ENCODE measurements at regions of chr2 and their contacts with region 1.

Region 1: DNA sequence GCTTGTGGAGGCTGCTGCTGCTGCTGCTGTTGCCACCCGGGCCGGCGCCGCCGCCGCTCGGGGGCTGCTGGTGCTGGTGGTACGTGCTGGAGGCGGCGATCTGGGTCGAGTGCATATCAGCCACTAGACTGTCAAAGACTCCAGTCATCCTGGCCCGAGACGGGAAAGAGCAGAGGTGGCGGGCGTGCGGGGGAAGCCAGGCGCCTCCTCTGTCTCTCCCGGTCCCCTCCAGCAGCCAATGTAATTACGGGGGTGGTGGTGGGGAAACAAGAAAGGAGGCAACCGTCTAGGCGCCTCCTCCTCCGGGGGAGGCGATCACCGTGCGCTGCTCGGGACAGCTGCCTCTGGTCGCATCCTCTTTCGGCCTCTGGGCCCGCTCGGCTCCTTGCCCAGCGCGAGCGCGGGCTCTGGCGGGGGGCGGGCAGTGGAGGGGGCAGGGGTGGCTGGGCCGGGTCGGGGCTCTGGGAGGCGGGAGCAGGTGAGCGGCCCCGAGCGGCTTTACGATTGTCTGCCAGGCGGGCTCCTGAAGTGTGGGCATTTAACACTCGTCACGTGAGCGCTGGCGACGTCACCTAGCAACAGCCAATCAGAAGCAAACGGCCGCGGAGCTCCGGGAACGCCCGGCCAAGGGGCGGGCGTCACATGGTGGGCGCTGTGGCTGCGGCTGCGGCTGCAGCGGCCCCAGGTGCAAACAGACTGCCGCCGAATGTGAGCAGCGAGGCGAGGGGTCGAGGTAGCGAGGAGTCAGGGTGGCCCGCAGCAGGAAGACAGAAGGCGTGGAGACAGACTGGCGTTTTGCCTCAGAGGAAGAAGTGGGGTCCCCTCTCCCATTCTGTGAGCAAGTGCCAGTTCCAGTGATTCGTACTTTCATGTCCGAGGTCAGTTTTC is at the start of gene DLX2:
- DNase-seq: peak; percentile 53
- ATAC-seq: peak; percentile 68
- H3K4me3 Mint-ChIP-seq: peak within 1 kb of the TSS; percentile 80
- H3K27ac Mint-ChIP-seq: peak within 1 kb of the TSS; percentile 61
- H3K4me1 Mint-ChIP-seq: peaks cover 39% of the 10 kb centered on the region
- H3K27me3 Mint-ChIP-seq: peaks cover 56% of the 10 kb centered on the region
- CTCF ChIP-seq: no peak
- total RNA-seq, gene DLX2: 0.16 TPM in 1 of 2 replicates, not detected in the other

Region 2: DNA sequence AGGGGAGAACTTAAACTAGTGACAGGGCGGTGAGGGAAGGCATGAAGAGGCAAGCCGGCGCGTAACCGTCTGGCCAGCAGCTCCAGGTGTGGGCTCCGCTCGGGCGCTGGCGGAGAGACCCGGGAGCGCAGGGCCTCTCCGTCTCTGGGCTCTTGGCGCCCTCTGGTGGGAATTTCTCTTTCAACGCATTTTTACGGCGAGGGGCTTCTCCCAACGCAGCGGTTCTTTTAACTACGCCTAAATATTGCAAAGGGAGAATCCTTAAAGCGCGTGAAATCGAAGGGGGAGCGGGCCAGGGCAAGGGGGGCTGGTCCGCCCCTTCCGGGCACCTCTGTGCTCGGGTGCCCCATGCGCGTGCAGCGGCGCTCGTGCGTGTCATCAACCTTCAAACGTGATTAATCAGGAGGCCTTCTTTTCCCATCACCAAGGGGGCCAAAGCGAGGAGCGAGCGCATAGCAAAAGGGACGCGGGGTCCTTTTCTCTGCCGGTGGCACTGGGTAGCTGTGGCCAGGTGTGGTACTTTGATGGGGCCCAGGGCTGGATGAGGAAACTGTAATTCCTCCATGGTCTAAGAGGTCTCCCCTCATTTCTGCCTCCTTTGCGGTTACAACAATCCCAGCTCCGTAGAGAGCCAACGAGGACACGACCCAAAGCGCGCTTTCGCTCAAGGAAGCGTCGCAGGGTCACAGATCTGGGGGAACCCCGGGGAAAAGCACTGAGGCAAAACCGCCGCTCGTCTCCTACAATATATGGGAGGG is 1286.7 kb before region 1 on chr2:
- CTCF ChIA-PET with region 1: no interaction called
- POLR2A ChIA-PET with region 1: no interaction called
- intact Hi-C with region 1: loop called (anchors 5 kb)
- DNase-seq: peak; percentile 45
- ATAC-seq: peak; percentile 44
- H3K4me3 Mint-ChIP-seq: peak overlapping the region; percentile 70
- H3K27ac Mint-ChIP-seq: no peak overlapping the region
- H3K4me1 Mint-ChIP-seq: peaks cover 50% of the 10 kb centered on the region
- H3K27me3 Mint-ChIP-seq: peaks cover 64% of the 10 kb centered on the region
- CTCF ChIP-seq: no peak

Region 3: DNA sequence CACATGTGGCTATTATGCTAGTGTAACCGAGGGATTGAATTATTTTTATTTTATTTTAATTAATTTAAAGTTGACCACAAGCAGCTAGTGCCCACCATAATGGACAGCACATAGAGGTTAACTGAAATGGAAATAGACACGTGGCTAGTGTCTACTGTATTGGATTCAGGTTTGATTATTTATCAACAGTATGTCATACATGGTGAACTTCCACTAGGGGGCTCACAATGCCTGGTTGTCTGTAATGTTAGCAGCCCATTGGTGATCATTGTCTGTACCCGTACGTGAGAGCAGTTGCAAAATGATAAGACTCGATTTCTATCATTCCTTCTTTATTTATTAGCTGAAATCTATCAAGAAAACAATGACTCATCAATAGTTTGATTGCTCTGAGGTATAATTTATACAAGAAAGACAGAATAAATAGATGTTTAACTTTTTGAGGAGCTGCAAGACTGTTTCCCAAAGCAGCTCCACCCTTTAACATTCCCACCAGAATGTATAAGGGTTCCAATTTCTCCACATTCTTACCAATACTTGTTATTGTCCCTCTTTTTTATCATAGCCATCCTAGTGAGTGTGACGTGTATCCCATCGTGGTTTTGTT is 503.8 kb before region 1 on chr2:
- CTCF ChIA-PET with region 1: interaction called, 3 read pairs
- POLR2A ChIA-PET with region 1: no interaction called
- intact Hi-C with region 1: loop called (anchors 2 kb)
- DNase-seq: no peak
- ATAC-seq: peak; percentile 96
- H3K4me3 Mint-ChIP-seq: no peak overlapping the region
- H3K27ac Mint-ChIP-seq: no peak overlapping the region
- H3K4me1 Mint-ChIP-seq: peaks cover 3% of the 10 kb centered on the region
- H3K27me3 Mint-ChIP-seq: peaks cover 4% of the 10 kb centered on the region
- CTCF ChIP-seq: no peak

Region 4: DNA sequence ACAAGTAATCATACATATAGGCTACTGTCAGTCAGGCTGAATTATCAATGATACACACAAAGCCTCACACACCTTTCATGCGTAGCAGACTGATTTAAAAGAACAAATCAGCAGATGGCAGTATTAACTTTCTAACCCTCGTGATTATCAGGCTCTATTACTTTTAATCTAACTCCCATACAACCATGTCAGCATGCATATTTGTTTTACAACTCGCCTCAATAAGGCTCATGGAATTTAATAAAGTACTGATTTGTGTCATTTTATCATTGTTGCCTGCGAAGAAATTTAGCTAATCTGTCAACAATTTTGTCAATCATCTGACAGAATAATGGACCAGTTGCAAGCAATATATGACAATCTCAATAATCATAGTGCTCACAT is 291.4 kb before region 1 on chr2:
- CTCF ChIA-PET with region 1: no interaction called
- POLR2A ChIA-PET with region 1: no interaction called
- intact Hi-C with region 1: loop called (anchors 5 kb)
- DNase-seq: no peak
- ATAC-seq: no peak
- H3K4me3 Mint-ChIP-seq: no peak overlapping the region
- H3K27ac Mint-ChIP-seq: no peak overlapping the region
- H3K4me1 Mint-ChIP-seq: no peaks in the 10 kb centered on the region
- H3K27me3 Mint-ChIP-seq: no peaks in the 10 kb centered on the region
- CTCF ChIP-seq: no peak

Region 5: DNA sequence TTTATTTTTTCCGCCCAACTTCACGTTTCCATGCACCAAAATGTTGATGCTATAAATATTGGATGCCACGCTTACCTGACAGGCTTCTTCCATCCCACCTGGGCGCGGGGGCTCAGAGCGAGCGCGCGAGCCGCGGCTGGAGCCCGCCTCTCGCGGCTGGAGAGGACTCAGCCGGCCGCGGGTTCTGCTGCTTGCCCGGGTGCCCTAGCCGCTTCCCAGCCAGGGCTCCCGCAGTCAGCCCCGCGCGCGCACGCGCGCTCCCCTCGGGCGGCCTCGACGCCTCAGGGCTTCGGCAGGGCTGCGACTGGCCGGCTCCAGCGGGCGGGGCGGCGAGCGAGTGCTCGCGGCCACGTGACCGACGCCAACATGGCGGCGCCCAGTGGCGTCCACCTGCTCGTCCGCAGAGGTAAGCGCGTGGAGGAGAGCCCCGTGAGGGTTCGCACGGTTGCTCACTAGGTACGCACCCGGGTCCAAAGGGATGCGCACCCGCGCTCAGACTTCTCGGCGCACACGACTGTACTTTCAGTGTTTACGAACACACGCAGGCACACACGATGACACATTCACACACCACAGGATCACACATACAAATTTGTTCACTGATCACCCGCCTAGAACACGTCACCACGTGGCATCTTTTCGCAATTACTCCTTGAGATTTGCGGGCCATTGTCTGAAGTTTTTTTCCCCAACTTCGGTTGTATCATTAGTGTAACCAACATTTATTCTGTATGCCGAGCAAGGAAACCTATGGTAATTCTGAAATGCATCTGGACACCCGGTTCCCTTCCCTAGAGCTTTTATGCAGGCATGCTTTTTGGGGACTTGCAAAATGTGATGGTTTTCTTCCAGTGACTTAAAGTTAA is 102.8 kb before region 1 on chr2 and contains the start of gene METAP1D:
- CTCF ChIA-PET with region 1: no interaction called
- POLR2A ChIA-PET with region 1: no interaction called
- intact Hi-C with region 1: loop called (anchors 2 kb)
- DNase-seq: peak; percentile 86
- ATAC-seq: peak; percentile 96
- H3K4me3 Mint-ChIP-seq: peak within 1 kb of the TSS; percentile 95
- H3K27ac Mint-ChIP-seq: peak within 1 kb of the TSS; percentile 96
- H3K4me1 Mint-ChIP-seq: peaks cover 21% of the 10 kb centered on the region
- H3K27me3 Mint-ChIP-seq: peaks cover 4% of the 10 kb centered on the region
- CTCF ChIP-seq: no peak
- total RNA-seq, gene METAP1D: 7.7 and 13.7 TPM in 2 replicates

Region 6: GRCh38 chr2:172465417-172466334 is 363.0 kb after region 1 on chr2:
- CTCF ChIA-PET with region 1: interaction called, 7 read pairs
- POLR2A ChIA-PET with region 1: no interaction called
- intact Hi-C with region 1: loop called (anchors 1 kb)
- DNase-seq: no peak
- ATAC-seq: peak; percentile 74
- H3K4me3 Mint-ChIP-seq: no peak overlapping the region
- H3K27ac Mint-ChIP-seq: no peak overlapping the region
- H3K4me1 Mint-ChIP-seq: peaks cover 49% of the 10 kb centered on the region
- H3K27me3 Mint-ChIP-seq: peaks cover 2% of the 10 kb centered on the region
- CTCF ChIP-seq: peak; percentile 83

Measured in activated B cell treated with CpG ODN at 0.5 μM for 24 hours (primary cell).